CD8-positive, alpha-beta T cell (primary cell): ENCODE measurements at regions of chr3 and their contacts with region 1.

Region 1: DNA sequence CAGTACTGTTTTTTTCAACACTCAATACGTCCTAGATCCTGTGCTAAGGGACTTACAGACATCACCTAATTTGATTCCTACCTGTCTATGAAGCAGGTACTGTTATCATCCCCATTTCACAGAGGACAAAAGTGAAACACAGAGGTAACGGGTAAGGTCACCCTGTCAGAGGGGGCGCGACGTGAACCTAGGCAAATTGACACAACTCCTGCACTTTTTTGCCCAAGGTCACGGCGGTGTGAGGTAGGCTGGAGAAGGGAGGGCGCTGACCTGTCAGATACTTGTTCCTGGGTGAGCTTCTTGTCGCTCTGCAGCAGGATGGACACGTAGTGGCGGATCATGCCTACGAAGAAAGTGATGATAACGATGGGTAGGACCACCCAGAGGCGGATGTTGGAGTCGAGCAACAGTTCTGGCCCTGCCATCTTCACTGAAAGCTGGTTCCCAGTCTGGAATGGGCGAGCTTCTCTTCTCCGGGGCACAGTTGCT is 360 bp downstream of the EMC3 start:
- DNase-seq: no peak
- ATAC-seq: peak; percentile 46
- H3K4me3 ChIP-seq: peak overlapping the region; percentile 71 to 83
- H3K4me3 Mint-ChIP-seq: peak overlapping the region; percentile 93
- H3K27ac ChIP-seq: peak overlapping the region; percentile 83 to 93
- H3K27ac Mint-ChIP-seq: peak overlapping the region; percentile 96
- H3K4me1 ChIP-seq: peaks cover 24% of the 10 kb centered on the region
- H3K4me1 Mint-ChIP-seq: peaks cover 39% of the 10 kb centered on the region
- H3K27me3 ChIP-seq: no peaks in the 10 kb centered on the region
- H3K27me3 Mint-ChIP-seq: no peaks in the 10 kb centered on the region
- CTCF ChIP-seq: no peak

Region 2: GRCh38 chr3:8963137-8963869 is 1023.0 kb before region 1 on chr3 and contains the start of gene RAD18:
- CTCF ChIA-PET with region 1: no interaction called
- POLR2A ChIA-PET with region 1: no interaction called
- intact Hi-C with region 1: loop called in 1 of 2 experiments (anchors 10 kb)
- DNase-seq: peak; percentile 83 to 95 (median 93)
- ATAC-seq: peak; percentile 94
- H3K4me3 ChIP-seq: peak within 1 kb of the TSS; percentile 85 to 89
- H3K4me3 Mint-ChIP-seq: peak within 1 kb of the TSS; percentile 98
- H3K27ac ChIP-seq: peak within 1 kb of the TSS; percentile 87 to 92
- H3K27ac Mint-ChIP-seq: peak within 1 kb of the TSS; percentile 94
- H3K4me1 ChIP-seq: peaks cover 8% of the 10 kb centered on the region
- H3K4me1 Mint-ChIP-seq: peaks cover 35% of the 10 kb centered on the region
- H3K27me3 ChIP-seq: no peaks in the 10 kb centered on the region
- H3K27me3 Mint-ChIP-seq: peaks cover under 1% of the 10 kb centered on the region
- CTCF ChIP-seq: no peak
- total RNA-seq, gene RAD18: 11.7 to 12.1 TPM

Region 3: DNA sequence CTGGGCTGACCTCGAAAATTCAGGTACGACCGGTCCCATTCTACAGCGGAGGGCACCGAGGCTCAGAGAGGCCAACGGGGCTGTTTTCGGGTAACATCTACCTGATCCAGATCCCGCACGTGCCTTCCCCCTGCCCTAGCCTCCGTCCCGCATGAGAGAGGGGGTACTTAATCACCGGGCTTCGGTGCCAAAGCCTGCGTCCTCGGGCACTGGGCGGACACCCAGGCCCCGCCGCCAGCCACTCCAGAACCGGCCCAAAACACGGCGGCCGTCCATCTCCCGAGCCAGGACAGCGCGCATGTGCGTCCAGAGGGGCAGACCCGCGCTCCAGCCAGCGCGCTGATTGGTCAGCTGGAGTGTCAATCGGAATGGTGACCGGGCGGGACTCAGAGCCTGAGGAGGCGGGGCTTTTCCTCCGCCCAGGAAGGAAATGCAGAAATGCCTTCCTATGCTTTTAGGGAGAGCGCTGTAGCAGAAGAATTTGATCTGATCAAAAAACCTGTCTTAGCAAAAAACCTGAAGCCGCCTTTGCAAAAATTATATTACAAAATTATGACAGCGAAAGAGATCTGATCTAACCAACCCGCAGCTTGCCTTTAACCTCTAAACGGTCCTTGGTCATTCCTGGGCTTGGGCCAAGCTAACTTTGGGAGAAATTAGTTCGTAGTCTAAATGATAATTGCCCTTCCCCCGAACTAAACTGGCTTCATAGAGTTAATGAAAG is 142.4 kb before region 1 on chr3 and contains the start of gene RPUSD3:
- CTCF ChIA-PET with region 1: no interaction called
- POLR2A ChIA-PET with region 1: no interaction called
- intact Hi-C with region 1: loop called in 1 of 2 experiments (anchors 5 kb)
- DNase-seq: peak; percentile 93 to 99 (median 96)
- ATAC-seq: peak; percentile 98
- H3K4me3 ChIP-seq: peak within 1 kb of the TSS; percentile 96 to 99
- H3K4me3 Mint-ChIP-seq: peak within 1 kb of the TSS; percentile 97
- H3K27ac ChIP-seq: peak within 1 kb of the TSS; percentile 64 to 82
- H3K27ac Mint-ChIP-seq: peak within 1 kb of the TSS; percentile 90
- H3K4me1 ChIP-seq: peaks cover 6% of the 10 kb centered on the region
- H3K4me1 Mint-ChIP-seq: peaks cover 26% of the 10 kb centered on the region
- H3K27me3 ChIP-seq: no peaks in the 10 kb centered on the region
- H3K27me3 Mint-ChIP-seq: no peaks in the 10 kb centered on the region
- CTCF ChIP-seq: no peak
- total RNA-seq, gene RPUSD3: 5.3 to 6.4 TPM

Region 4: DNA sequence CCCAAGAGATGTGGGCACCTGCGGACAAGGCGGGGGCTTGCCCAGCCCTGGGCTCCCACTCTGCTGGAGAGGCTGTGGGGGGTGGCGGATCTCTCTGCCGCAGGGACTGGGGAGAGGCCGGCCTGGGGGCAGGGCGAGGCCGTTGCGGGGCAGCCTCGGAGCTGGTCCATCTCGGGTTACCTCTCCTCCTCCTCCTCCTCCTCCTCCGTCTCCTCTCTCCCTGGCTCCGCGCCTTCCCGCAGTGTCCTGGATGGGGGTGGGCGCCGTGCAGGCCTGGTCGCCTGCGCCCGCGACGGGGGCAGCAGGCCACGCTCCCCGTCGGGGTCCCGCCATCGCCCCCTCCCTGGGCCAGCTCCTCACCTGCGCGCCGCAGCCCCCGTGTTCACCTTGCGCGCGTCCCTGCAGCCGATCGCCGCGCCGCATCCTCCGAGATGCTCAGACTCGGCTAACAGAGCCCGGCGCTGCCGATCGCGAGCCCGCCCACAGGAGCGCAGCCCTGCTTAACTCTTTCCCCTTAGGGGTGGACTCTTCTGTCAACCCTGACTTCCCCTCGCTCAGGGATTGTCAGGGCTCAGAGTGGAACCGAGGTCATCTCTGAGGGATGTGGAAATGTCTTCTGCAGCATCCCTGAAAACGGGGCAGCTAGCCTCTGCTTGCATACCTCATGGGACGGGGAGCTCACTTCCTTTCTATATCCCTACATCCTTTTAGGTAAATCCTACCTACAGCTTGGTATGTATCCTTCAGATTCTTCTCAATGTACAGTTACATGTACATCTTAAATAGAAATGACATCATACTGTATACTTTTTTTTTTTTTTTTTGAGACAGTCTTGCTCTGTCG is 34.1 kb before region 1 on chr3 and contains the start of gene PRRT3:
- CTCF ChIA-PET with region 1: no interaction called
- POLR2A ChIA-PET with region 1: interaction called, 4 read pairs
- intact Hi-C with region 1: loop called in 1 of 2 experiments (anchors 5 kb)
- DNase-seq: peak; percentile 22 to 74 (median 56)
- ATAC-seq: peak; percentile 93
- H3K4me3 ChIP-seq: peak within 1 kb of the TSS; percentile 58 to 64
- H3K4me3 Mint-ChIP-seq: peak within 1 kb of the TSS; percentile 90
- H3K27ac ChIP-seq: no peak within 1 kb of the TSS
- H3K27ac Mint-ChIP-seq: no peak within 1 kb of the TSS
- H3K4me1 ChIP-seq: peaks cover 12% of the 10 kb centered on the region
- H3K4me1 Mint-ChIP-seq: peaks cover 17% of the 10 kb centered on the region
- H3K27me3 ChIP-seq: no peaks in the 10 kb centered on the region
- H3K27me3 Mint-ChIP-seq: no peaks in the 10 kb centered on the region
- CTCF ChIP-seq: no peak
- total RNA-seq, gene PRRT3: 6.4 to 6.9 TPM

Region 5: DNA sequence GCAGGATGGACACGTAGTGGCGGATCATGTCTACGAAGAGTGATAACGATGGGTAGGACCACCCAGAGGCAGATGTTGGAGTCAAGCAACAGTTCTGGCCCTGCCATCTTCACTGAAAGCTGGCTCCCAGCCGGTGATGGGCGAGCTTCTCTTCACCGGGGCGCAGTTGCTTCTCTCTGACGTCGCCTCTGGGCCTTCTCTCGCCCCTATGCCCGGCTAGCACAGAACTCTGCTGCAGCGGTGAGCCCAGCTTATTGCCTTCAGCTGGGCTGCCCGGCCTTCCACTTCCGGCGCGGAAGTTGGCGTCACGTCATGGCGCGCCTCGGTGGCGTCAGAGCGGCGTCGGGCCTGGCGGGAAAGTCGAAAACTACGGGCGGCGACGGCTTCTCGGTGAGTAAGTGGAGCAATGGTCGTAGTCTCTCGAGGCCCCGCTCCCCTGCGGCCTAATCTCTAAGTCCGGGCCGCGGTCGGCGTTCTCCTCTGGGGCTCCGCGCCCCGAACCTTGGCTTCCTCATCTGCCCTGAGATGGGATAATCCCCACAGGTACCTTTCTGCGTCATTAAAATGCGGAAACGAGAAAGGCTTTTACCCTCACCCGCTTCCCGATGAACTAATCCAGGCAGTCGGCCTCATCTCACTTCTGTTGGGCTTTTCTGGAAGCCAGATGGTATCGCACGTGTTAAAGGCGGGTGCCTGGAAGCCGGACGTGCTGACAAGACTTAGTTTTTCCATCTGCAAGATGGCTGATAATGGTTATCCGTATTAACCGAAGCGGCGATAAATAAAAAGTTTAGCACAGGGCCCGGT is 40.0 kb after region 1 on chr3 and contains the start of gene FANCD2:
- CTCF ChIA-PET with region 1: no interaction called
- POLR2A ChIA-PET with region 1: interaction called, 6 read pairs
- intact Hi-C with region 1: loop called (anchors 1 kb)
- DNase-seq: peak; percentile 87 to 97 (median 93)
- ATAC-seq: peak; percentile 92
- H3K4me3 ChIP-seq: peak within 1 kb of the TSS; percentile 76 to 82
- H3K4me3 Mint-ChIP-seq: peak within 1 kb of the TSS; percentile 98
- H3K27ac ChIP-seq: peak within 1 kb of the TSS; percentile 84
- H3K27ac Mint-ChIP-seq: peak within 1 kb of the TSS; percentile 96
- H3K4me1 ChIP-seq: peaks cover 18% of the 10 kb centered on the region
- H3K4me1 Mint-ChIP-seq: peaks cover 27% of the 10 kb centered on the region
- H3K27me3 ChIP-seq: no peaks in the 10 kb centered on the region
- H3K27me3 Mint-ChIP-seq: no peaks in the 10 kb centered on the region
- CTCF ChIP-seq: no peak
- total RNA-seq, gene FANCD2: 15.8 to 17.7 TPM

Region 6: GRCh38 chr3:10224784-10225665 is 238.7 kb after region 1 on chr3:
- CTCF ChIA-PET with region 1: interaction called, 3 read pairs
- POLR2A ChIA-PET with region 1: no interaction called
- intact Hi-C with region 1: loop called in 1 of 2 experiments (anchors 10 kb)
- DNase-seq: peak; percentile 34 to 81 (median 65)
- ATAC-seq: peak; percentile 70
- H3K4me3 ChIP-seq: no peak overlapping the region
- H3K4me3 Mint-ChIP-seq: peak overlapping the region; percentile 7
- H3K27ac ChIP-seq: peak overlapping the region in 1 of 2 experiments; percentile 30
- H3K27ac Mint-ChIP-seq: peak overlapping the region; percentile 75
- H3K4me1 ChIP-seq: peaks cover 24% of the 10 kb centered on the region
- H3K4me1 Mint-ChIP-seq: peaks cover 51% of the 10 kb centered on the region
- H3K27me3 ChIP-seq: no peaks in the 10 kb centered on the region
- H3K27me3 Mint-ChIP-seq: no peaks in the 10 kb centered on the region
- CTCF ChIP-seq: peak; percentile 86